CD4-positive, alpha-beta T cell (primary cell): ENCODE measurements at regions of chr7 and their contacts with region 1.

Region 1: DNA sequence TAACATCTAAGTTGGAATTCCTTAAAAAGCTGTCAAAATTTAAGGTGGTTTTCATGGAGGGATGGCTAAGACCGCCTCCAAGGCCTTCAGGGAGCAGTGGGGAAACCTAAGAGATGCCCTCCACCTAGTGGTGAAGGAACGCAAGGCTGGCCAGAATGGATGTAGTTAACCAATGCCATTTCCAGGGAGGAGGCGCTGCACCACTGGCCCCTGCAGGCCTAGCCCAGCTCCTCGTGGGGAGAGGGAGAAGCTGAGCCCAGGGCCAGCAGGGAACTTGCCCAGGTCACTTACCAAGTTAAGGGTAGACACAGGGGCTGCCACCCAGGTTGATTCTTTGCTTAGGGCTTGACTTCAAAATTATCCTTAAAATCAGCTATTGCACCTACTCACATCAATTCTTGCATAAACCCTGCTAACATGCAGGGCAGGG is 32.0 kb downstream of the FIGNL1 start:
- DNase-seq: peak; percentile 50 to 86 (median 62)
- ATAC-seq: peak; percentile 91
- H3K4me3 ChIP-seq: no peak overlapping the region
- H3K4me3 Mint-ChIP-seq: no peak overlapping the region
- H3K27ac ChIP-seq: no peak overlapping the region
- H3K27ac Mint-ChIP-seq: no peak overlapping the region
- H3K4me1 ChIP-seq: peaks cover 28% of the 10 kb centered on the region
- H3K4me1 Mint-ChIP-seq: peaks cover 31% of the 10 kb centered on the region
- H3K27me3 ChIP-seq: no peaks in the 10 kb centered on the region
- H3K27me3 Mint-ChIP-seq: no peaks in the 10 kb centered on the region
- CTCF ChIP-seq: peak; percentile 96

Region 2: GRCh38 chr7:50142425-50143017 is 275.6 kb before region 1 on chr7:
- CTCF ChIA-PET with region 1: interaction called, 12 read pairs
- POLR2A ChIA-PET with region 1: interaction called, 5 read pairs
- intact Hi-C with region 1: loop called (anchors 1 kb)
- DNase-seq: peak in 7 of 14 experiments; percentile 24 to 83 (median 66)
- ATAC-seq: peak; percentile 75
- H3K4me3 ChIP-seq: no peak overlapping the region
- H3K4me3 Mint-ChIP-seq: peak overlapping the region; percentile 44
- H3K27ac ChIP-seq: no peak overlapping the region
- H3K27ac Mint-ChIP-seq: peak overlapping the region; percentile 35
- H3K4me1 ChIP-seq: peaks cover 15% of the 10 kb centered on the region
- H3K4me1 Mint-ChIP-seq: peaks cover 33% of the 10 kb centered on the region
- H3K27me3 ChIP-seq: no peaks in the 10 kb centered on the region
- H3K27me3 Mint-ChIP-seq: no peaks in the 10 kb centered on the region
- CTCF ChIP-seq: peak; percentile 83

Region 3: DNA sequence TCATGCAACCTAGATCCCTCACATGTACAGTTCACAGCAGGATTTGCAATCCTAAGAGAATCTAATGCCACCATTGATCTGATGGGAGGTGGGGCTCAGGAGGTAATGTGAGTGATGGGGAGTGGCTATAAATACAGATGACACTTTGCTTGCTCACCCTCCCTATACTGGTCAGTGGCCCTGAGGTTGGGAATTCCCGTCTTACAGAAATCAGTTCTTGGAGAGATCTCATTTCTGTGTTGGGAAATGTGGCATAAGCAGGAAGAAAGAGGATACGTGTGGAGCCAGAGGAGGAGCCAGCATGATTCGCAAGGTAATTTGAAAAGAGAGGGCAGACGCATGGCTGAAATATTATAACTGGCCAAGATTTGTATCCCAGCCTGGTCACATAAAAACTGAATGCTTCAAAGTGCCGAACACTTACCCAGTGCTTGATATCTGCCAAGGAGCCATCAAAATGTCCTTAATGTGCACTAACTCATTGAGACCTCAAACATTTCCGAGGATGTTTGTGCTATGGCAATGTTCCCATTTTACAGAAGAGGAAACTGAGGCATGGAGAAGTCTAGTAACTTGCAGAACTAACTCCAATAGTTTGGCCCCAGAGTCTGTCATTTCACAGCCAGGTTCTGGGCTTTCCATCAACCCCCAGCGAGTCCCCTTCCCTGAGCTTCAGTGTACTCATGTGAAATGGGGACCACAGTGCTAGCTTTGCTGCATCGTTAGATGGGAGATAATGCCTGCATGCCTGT is 119.1 kb before region 1 on chr7:
- CTCF ChIA-PET with region 1: no interaction called
- POLR2A ChIA-PET with region 1: no interaction called
- intact Hi-C with region 1: loop called in 1 of 2 experiments (anchors 5 kb)
- DNase-seq: no peak
- ATAC-seq: no peak
- H3K4me3 ChIP-seq: no peak overlapping the region
- H3K4me3 Mint-ChIP-seq: no peak overlapping the region
- H3K27ac ChIP-seq: no peak overlapping the region
- H3K27ac Mint-ChIP-seq: peak overlapping the region; percentile 90
- H3K4me1 ChIP-seq: peaks cover 28% of the 10 kb centered on the region
- H3K4me1 Mint-ChIP-seq: peaks cover 66% of the 10 kb centered on the region
- H3K27me3 ChIP-seq: no peaks in the 10 kb centered on the region
- H3K27me3 Mint-ChIP-seq: no peaks in the 10 kb centered on the region
- CTCF ChIP-seq: no peak

Region 4: GRCh38 chr7:50397320-50397970 is 20.7 kb before region 1 on chr7:
- CTCF ChIA-PET with region 1: interaction called, 11 read pairs
- POLR2A ChIA-PET with region 1: interaction called, 3 read pairs
- intact Hi-C with region 1: no loop called
- DNase-seq: peak in 3 of 14 experiments; percentile 65 to 79 (median 79)
- ATAC-seq: peak; percentile 35
- H3K4me3 ChIP-seq: no peak overlapping the region
- H3K4me3 Mint-ChIP-seq: no peak overlapping the region
- H3K27ac ChIP-seq: peak overlapping the region; percentile 69 to 81
- H3K27ac Mint-ChIP-seq: peak overlapping the region; percentile 94
- H3K4me1 ChIP-seq: peaks cover 52% of the 10 kb centered on the region
- H3K4me1 Mint-ChIP-seq: peaks cover 82% of the 10 kb centered on the region
- H3K27me3 ChIP-seq: no peaks in the 10 kb centered on the region
- H3K27me3 Mint-ChIP-seq: no peaks in the 10 kb centered on the region
- CTCF ChIP-seq: no peak